ENCODE measurements at regions of chr13 and their contacts with region 1.

Region 1: GRCh38 chr13:114143806-114144605 is 11.6 kb upstream of the RASA3 start:
- DNase-seq: peak in 9 of 10 donors; percentile 47 to 83 (median 69)
- ATAC-seq: peak; percentile 24 to 39
- H3K4me3 Mint-ChIP-seq: peak overlapping the region in 5 of 10 donors; percentile 14 to 77 (median 64)
- H3K27ac Mint-ChIP-seq: peak overlapping the region in 1 of 10 donors; percentile 99
- H3K4me1 Mint-ChIP-seq: peaks cover 12 to 42% (median 41%) of the 10 kb centered on the region in 4 donors
- H3K27me3 Mint-ChIP-seq: no peaks in the 10 kb centered on the region

Region 2: DNA sequence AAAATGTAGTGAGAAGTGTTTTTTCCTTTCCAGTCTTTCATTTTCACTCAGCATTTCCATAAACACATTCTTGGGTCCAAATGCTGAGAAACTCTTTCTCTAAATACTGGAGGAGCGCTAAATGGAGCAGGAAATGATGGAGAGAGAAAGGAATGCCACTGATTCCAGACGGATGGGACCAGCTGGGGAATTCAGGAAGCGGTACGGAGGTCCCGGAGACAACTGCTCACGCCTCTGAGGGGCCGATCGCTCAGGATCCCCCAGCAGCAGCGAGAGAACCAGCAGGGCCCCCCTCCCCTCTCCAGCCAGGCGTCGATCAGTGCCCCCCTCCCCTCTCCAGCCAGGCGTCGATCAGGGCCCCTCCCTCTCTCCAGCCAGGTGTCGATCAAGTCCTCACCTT is 24.8 kb before region 1 on chr13:
- POLR2A ChIA-PET with region 1: interaction called, 191 read pairs
- DNase-seq: peak in 1 of 10 donors; percentile 11
- ATAC-seq: no peak
- H3K4me3 Mint-ChIP-seq: peak overlapping the region; percentile 56 to 88 (median 76)
- H3K27ac Mint-ChIP-seq: peak overlapping the region; percentile 81 to 95 (median 88)
- H3K4me1 Mint-ChIP-seq: peaks cover 43 to 84% (median 79%) of the 10 kb centered on the region in 4 donors
- H3K27me3 Mint-ChIP-seq: peaks cover 0 to 1% (median 0%) of the 10 kb centered on the region in 5 donors

Region 3: GRCh38 chr13:114132419-114133121 is 11.4 kb before region 1 on chr13 and contains the start of gene RASA3:
- POLR2A ChIA-PET with region 1: interaction called, 191 read pairs
- DNase-seq: peak; percentile 45 to 77 (median 62)
- ATAC-seq: peak; percentile 27 to 40
- H3K4me3 Mint-ChIP-seq: peak within 1 kb of the TSS; percentile 94 to 100 (median 98)
- H3K27ac Mint-ChIP-seq: peak within 1 kb of the TSS; percentile 88 to 100 (median 98)
- H3K4me1 Mint-ChIP-seq: peaks cover 37 to 67% (median 58%) of the 10 kb centered on the region in 4 donors
- H3K27me3 Mint-ChIP-seq: peaks cover 0 to 2% (median 0%) of the 10 kb centered on the region in 5 donors
- polyA plus RNA-seq, gene RASA3: 62.2 to 169 (median 105) TPM

Region 4: GRCh38 chr13:114219392-114219791 is 75.4 kb after region 1 on chr13:
- POLR2A ChIA-PET with region 1: interaction called, 20 read pairs
- DNase-seq: peak in 3 of 10 donors; percentile 47 to 58 (median 56)
- ATAC-seq: peak; percentile 79 to 86
- H3K4me3 Mint-ChIP-seq: peak overlapping the region; percentile 39 to 81 (median 71)
- H3K27ac Mint-ChIP-seq: peak overlapping the region; percentile 48 to 95 (median 85)
- H3K4me1 Mint-ChIP-seq: peaks cover 29 to 82% (median 74%) of the 10 kb centered on the region in 4 donors
- H3K27me3 Mint-ChIP-seq: peaks cover 0 to under 1% (median 0%) of the 10 kb centered on the region in 5 donors

Region 5: DNA sequence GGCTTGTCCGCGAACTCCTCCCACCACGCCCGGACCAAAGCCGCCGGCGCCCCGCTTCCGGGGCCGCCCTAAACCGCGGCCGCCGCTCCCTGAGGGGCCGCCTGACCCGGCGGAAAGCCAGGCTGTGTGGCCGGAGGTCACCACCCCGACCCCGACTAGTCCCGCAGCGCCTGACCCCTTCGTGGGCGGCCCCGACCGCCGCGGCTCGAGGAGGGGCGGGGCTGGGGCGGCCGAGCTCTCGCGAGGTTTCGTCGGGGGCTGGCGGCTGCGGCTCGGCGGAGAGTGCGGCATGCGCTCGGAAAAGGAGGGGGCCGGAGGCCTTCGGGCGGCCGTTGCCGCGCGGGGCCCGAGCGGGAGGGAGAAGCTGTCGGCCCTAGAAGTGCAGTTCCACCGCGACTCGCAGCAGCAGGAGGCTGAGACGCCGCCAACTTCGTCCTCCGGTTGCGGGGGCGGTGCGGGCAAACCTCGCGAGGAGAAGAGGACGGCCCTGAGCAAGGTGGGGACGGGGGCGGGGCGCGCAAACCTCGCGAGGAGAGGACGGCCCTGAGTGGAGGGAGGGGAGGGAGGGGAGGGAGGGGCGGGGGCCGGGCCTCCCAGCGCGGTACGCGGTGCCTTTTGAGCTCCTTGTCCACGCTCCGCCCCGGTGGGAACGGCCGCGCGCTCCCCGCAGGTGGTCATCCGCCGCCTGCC is 137.5 kb after region 1 on chr13 and contains the start of gene UPF3A:
- POLR2A ChIA-PET with region 1: interaction called, 12 read pairs
- DNase-seq: peak; percentile 74 to 98 (median 86)
- ATAC-seq: peak; percentile 77 to 83
- H3K4me3 Mint-ChIP-seq: peak within 1 kb of the TSS; percentile 87 to 96 (median 92)
- H3K27ac Mint-ChIP-seq: peak within 1 kb of the TSS; percentile 95 to 98 (median 96)
- H3K4me1 Mint-ChIP-seq: peaks cover 22 to 48% (median 38%) of the 10 kb centered on the region in 4 donors
- H3K27me3 Mint-ChIP-seq: no peaks in the 10 kb centered on the region
- polyA plus RNA-seq, gene UPF3A: 17.7 to 35.4 (median 20.9) TPM

Measured in naive thymus-derived CD8-positive, alpha-beta T cell (primary cell).